AG04450 (cell line): ENCODE measurements at regions of chr2 and their contacts with region 1.

Region 1: DNA sequence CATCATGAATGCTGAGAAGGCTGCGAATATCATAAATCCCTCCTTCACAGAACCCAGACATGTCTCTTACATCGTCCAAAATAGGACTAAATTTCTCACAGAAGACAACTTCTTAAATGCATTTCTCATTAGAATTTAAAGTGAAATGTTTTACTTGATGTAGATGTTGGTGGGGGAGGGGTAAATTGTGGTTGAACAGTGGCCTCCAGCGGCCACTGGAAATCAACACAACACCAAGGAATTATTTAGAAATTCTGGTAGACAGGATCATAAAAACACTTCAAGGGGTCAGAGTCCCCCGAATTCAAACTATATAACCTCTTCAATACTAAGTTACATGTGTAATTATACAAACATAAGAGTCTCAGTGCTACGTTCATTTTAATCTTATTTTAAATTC is 135.9 kb downstream of the ABCA12 start:
- DNase-seq: peak; percentile 6
- H3K4me3 ChIP-seq: no peak overlapping the region
- H3K27ac ChIP-seq: no peak overlapping the region
- H3K27me3 ChIP-seq: no peaks in the 10 kb centered on the region
- CTCF ChIP-seq: peak; percentile 65

Region 2: GRCh38 chr2:214293593-214293992 is 708.9 kb before region 1 on chr2:
- CTCF ChIA-PET with region 1: interaction called, 10 read pairs
- POLR2A ChIA-PET with region 1: no interaction called
- DNase-seq: no peak
- H3K4me3 ChIP-seq: no peak overlapping the region
- H3K27ac ChIP-seq: no peak overlapping the region
- H3K27me3 ChIP-seq: no peaks in the 10 kb centered on the region
- CTCF ChIP-seq: no peak

Region 3: GRCh38 chr2:215022418-215022817 is 19.9 kb after region 1 on chr2:
- CTCF ChIA-PET with region 1: no interaction called
- POLR2A ChIA-PET with region 1: no interaction called
- DNase-seq: no peak
- H3K4me3 ChIP-seq: no peak overlapping the region
- H3K27ac ChIP-seq: no peak overlapping the region
- H3K27me3 ChIP-seq: no peaks in the 10 kb centered on the region
- CTCF ChIP-seq: no peak